Mammary epithelial cell (primary cell): ENCODE measurements at regions of chr17 and their contacts with region 1.

Region 1: GRCh38 chr17:1800240-1800639 is 29.5 kb downstream of the SMYD4 start:
- DNase-seq: no peak
- H3K4me3 ChIP-seq: no peak overlapping the region
- H3K27ac ChIP-seq: no peak overlapping the region
- H3K4me1 ChIP-seq: no peaks in the 10 kb centered on the region
- H3K27me3 ChIP-seq: no peaks in the 10 kb centered on the region
- CTCF ChIP-seq: no peak

Region 2: GRCh38 chr17:1684378-1685189 is 115.7 kb before region 1 on chr17 and contains the start of gene PRPF8:
- CTCF ChIA-PET with region 1: no interaction called
- dilution Hi-C with region 1: no loop called
- in situ Hi-C with region 1: no loop called
- intact Hi-C with region 1: no loop called
- DNase-seq: peak; percentile 95
- H3K4me3 ChIP-seq: peak within 1 kb of the TSS; percentile 80 to 96 (median 93)
- H3K27ac ChIP-seq: peak within 1 kb of the TSS; percentile 66
- H3K4me1 ChIP-seq: peaks cover 9% of the 10 kb centered on the region
- H3K27me3 ChIP-seq: no peaks in the 10 kb centered on the region
- CTCF ChIP-seq: no peak
- total RNA-seq, gene PRPF8: 114 to 243 TPM

Region 3: DNA sequence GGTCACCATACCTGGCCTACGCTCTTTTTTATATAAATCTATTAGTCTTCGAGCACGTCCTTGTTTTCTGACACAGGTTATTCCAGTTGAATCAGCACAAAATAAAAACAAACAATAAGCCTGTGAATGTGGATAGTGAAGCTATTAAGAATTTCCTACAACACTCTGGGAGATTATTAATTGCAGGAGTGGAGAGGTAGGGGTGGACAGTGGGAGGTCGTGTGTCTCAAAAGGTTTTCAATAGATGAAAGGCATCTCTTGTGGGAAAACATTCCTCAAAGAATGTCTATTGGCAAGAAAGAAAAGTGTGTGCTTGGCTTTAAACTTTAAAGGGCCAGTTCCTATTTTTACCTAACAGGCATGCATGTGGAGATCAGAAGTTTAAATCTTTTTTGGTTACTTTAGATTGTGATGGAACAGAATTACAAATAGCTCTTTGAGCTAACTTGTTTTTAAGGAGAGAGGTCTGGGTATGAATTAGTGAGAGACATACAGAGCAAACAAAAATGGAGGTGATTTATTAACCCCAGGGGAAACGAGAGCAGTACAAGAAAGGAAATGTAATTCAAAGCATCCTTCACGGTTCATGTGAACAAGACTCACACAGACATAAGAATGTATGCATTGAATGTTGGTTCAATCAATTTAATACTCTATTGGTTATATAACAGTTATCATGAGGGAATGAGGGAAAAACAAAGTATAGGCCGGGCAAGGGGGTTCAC is 20.4 kb after region 1 on chr17:
- CTCF ChIA-PET with region 1: no interaction called
- dilution Hi-C with region 1: no loop called
- in situ Hi-C with region 1: no loop called
- intact Hi-C with region 1: loop called (anchors 1 kb)
- DNase-seq: no peak
- H3K4me3 ChIP-seq: no peak overlapping the region
- H3K27ac ChIP-seq: no peak overlapping the region
- H3K4me1 ChIP-seq: no peaks in the 10 kb centered on the region
- H3K27me3 ChIP-seq: no peaks in the 10 kb centered on the region
- CTCF ChIP-seq: no peak

Region 4: GRCh38 chr17:1847191-1847590 is 47.0 kb after region 1 on chr17:
- CTCF ChIA-PET with region 1: no interaction called
- dilution Hi-C with region 1: loop called (anchors 5 kb)
- in situ Hi-C with region 1: no loop called
- intact Hi-C with region 1: no loop called
- DNase-seq: no peak
- H3K4me3 ChIP-seq: no peak overlapping the region
- H3K27ac ChIP-seq: no peak overlapping the region
- H3K4me1 ChIP-seq: no peaks in the 10 kb centered on the region
- H3K27me3 ChIP-seq: no peaks in the 10 kb centered on the region
- CTCF ChIP-seq: no peak